A549 (cell line): ENCODE measurements at regions of chr7 and their contacts with region 1.

Region 1: GRCh38 chr7:54773472-54774399 is 14.7 kb upstream of the SEC61G start:
- DNase-seq: peak; percentile 69 to 93
- ATAC-seq: peak; percentile 96 to 98
- H3K4me3 ChIP-seq: peak overlapping the region; percentile 48
- H3K27ac ChIP-seq: peak overlapping the region; percentile 74 to 81
- H3K4me1 ChIP-seq: peaks cover 14% of the 10 kb centered on the region
- CTCF ChIP-seq: peak; percentile 93
- EP300 ChIP-seq: no peak
- POLR2A ChIP-seq: no peak
- RAD21 ChIP-seq: peak; percentile 94 to 99

Region 2: GRCh38 chr7:54788664-54789063 is 14.9 kb after region 1 on chr7:
- CTCF ChIA-PET with region 1: interaction called, 46 read pairs
- POLR2A ChIA-PET with region 1: no interaction called
- DNase-seq: peak; percentile 94 to 96
- ATAC-seq: peak; percentile 97 to 100
- H3K4me3 ChIP-seq: no peak overlapping the region
- H3K27ac ChIP-seq: peak overlapping the region; percentile 68 to 82
- H3K4me1 ChIP-seq: peaks cover 29% of the 10 kb centered on the region
- CTCF ChIP-seq: peak; percentile 89
- EP300 ChIP-seq: no peak
- POLR2A ChIP-seq: no peak
- RAD21 ChIP-seq: peak; percentile 96 to 97

Region 3: GRCh38 chr7:54946749-54947148 is 173.0 kb after region 1 on chr7:
- CTCF ChIA-PET with region 1: interaction called, 10 read pairs
- POLR2A ChIA-PET with region 1: no interaction called
- DNase-seq: no peak
- ATAC-seq: no peak
- H3K4me3 ChIP-seq: no peak overlapping the region
- H3K27ac ChIP-seq: no peak overlapping the region
- H3K4me1 ChIP-seq: peaks cover 6% of the 10 kb centered on the region; the same call in 2 of the 3 replicates
- CTCF ChIP-seq: no peak
- EP300 ChIP-seq: no peak
- POLR2A ChIP-seq: no peak
- RAD21 ChIP-seq: no peak

Region 4: GRCh38 chr7:55073945-55074499 is 300.3 kb after region 1 on chr7:
- CTCF ChIA-PET with region 1: interaction called, 10 read pairs
- POLR2A ChIA-PET with region 1: no interaction called
- DNase-seq: peak; percentile 93 to 98
- ATAC-seq: peak; percentile 96 to 97
- H3K4me3 ChIP-seq: peak overlapping the region; percentile 14; the same call in 2 of the 3 replicates
- H3K27ac ChIP-seq: peak overlapping the region; percentile 75 to 92
- H3K4me1 ChIP-seq: peaks cover 95% of the 10 kb centered on the region
- CTCF ChIP-seq: no peak
- EP300 ChIP-seq: peak; percentile 39 to 67; a peak in 2 of 5 replicates
- POLR2A ChIP-seq: no peak
- RAD21 ChIP-seq: peak; percentile 17 to 34; a peak in 1 of 5 replicates

Region 5: DNA sequence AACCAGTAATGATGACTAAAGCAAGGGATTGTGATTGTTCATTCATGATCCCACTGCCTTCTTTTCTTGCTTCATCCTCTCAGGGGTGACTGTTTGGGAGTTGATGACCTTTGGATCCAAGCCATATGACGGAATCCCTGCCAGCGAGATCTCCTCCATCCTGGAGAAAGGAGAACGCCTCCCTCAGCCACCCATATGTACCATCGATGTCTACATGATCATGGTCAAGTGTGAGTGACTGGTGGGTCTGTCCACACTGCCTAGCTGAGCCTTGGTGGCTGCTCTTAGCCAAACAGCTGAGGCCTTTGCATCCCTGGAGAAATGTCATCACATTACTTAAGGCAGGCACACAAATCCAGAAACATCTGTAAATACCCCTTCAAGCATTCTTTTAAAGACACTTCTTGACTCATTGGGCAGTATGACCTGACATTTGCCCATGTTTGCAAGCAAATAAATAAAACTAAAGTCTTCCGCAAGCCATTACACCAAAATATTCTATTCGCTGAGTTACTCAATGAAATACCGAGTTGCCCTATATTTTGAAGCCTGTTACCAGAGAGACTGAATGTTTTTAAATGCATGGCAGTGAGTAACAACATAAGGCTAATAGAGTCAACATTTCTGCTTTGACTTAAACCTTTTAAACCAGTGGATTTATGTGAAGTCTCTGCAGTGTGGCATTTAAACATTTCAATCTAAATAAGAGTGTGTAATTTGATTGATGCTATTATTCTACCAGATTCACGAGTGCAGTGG is 425.1 kb after region 1 on chr7:
- CTCF ChIA-PET with region 1: interaction called, 16 read pairs
- POLR2A ChIA-PET with region 1: no interaction called
- DNase-seq: no peak
- ATAC-seq: no peak
- H3K4me3 ChIP-seq: no peak overlapping the region
- H3K27ac ChIP-seq: no peak overlapping the region
- H3K4me1 ChIP-seq: no peaks in the 10 kb centered on the region
- CTCF ChIP-seq: no peak
- EP300 ChIP-seq: no peak
- POLR2A ChIP-seq: no peak
- RAD21 ChIP-seq: no peak

Region 6: GRCh38 chr7:55265836-55266642 is 492.3 kb after region 1 on chr7:
- CTCF ChIA-PET with region 1: interaction called, 18 read pairs
- POLR2A ChIA-PET with region 1: no interaction called
- DNase-seq: peak in 1 of 2 experiments; percentile 47
- ATAC-seq: peak; percentile 45 to 69; a peak in 3 of 6 replicates
- H3K4me3 ChIP-seq: no peak overlapping the region
- H3K27ac ChIP-seq: no peak overlapping the region
- H3K4me1 ChIP-seq: peaks cover 10% of the 10 kb centered on the region; the same call in 1 of the 3 replicates
- CTCF ChIP-seq: no peak
- EP300 ChIP-seq: no peak
- POLR2A ChIP-seq: no peak
- RAD21 ChIP-seq: no peak